ENCODE measurements at regions of chr2 and their contacts with region 1.

Region 1: DNA sequence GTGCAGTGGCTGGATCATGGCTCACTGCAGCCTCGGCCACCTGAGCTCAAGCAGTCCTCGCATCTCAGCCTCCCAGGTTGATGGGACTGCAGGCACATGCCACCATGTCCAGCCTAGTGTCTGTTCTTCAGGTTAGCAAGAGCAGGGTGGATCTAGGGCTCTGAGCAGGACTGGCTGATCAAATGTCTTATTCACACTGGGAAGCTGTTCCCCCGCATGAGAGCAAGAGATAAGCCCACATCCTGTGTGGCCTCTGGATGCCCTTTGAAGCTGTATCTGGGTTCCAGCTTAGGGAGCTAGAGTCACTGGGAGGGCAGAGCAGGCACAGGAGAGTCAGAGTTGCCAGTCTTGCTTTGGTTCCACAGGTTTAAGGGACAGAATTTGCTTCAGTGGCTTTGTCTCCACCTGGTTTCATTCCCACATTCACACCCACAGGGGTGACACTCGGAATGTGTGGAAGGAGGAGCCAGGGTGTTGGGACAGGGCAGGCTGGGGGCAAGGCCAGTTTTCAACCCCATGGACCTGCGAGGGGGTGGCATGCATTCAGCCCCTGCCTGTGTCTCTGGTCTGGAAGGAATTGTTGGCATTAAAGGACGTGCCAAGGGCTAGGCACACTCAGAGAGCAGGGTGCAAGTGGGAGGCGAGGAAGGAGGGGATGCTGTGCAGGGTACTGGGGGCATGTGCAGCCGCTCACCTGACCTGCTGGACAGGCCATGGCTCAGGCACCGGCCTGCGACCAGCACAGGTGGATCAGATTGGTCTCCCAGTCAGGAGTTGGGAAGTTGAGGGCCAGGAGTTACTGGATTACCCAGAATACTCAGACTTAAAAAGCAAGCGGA is 24.5 kb downstream of the PTPN18 start:
- DNase-seq: peak; percentile 61
- ATAC-seq: peak; percentile 87
- H3K4me3 Mint-ChIP-seq: no peak overlapping the region
- H3K27ac Mint-ChIP-seq: peak overlapping the region; percentile 70
- H3K4me1 Mint-ChIP-seq: peaks cover 48% of the 10 kb centered on the region
- H3K27me3 Mint-ChIP-seq: no peaks in the 10 kb centered on the region

Region 2: DNA sequence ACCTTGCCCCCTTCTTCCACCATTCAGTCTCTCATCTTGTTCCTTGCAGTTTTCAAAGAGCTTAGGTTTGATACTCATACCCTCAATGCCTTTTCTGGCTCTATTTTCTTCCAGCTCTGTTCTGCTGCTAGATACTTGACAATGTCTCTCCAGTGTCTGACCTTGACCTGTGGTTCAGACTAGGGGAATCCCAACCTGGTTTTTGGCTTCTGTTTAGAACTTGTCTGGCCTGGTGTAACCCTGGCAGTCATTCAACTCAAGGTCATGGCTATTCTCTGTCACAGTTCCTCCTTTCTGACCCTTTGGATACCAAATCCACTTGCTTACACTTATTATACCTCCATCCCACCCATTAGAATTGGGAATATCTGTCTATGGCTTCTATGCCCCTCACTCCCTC is 69.4 kb before region 1 on chr2:
- CTCF ChIA-PET with region 1: no interaction called
- POLR2A ChIA-PET with region 1: no interaction called
- intact Hi-C with region 1: no loop called
- DNase-seq: no peak
- ATAC-seq: no peak
- H3K4me3 Mint-ChIP-seq: no peak overlapping the region
- H3K27ac Mint-ChIP-seq: no peak overlapping the region
- H3K4me1 Mint-ChIP-seq: no peaks in the 10 kb centered on the region
- H3K27me3 Mint-ChIP-seq: no peaks in the 10 kb centered on the region

Region 3: GRCh38 chr2:130355578-130356431 is 24.5 kb before region 1 on chr2 and contains the start of gene PTPN18:
- CTCF ChIA-PET with region 1: no interaction called
- POLR2A ChIA-PET with region 1: no interaction called
- intact Hi-C with region 1: loop called in 1 of 2 experiments (anchors 1 kb)
- DNase-seq: peak; percentile 76
- ATAC-seq: peak; percentile 96
- H3K4me3 Mint-ChIP-seq: peak within 1 kb of the TSS; percentile 67
- H3K27ac Mint-ChIP-seq: peak within 1 kb of the TSS; percentile 43
- H3K4me1 Mint-ChIP-seq: peaks cover 8% of the 10 kb centered on the region
- H3K27me3 Mint-ChIP-seq: no peaks in the 10 kb centered on the region
- total RNA-seq, gene PTPN18: 41.6 to 49.3 TPM

Region 4: GRCh38 chr2:130366720-130367119 is 13.6 kb before region 1 on chr2:
- CTCF ChIA-PET with region 1: interaction called, 3 read pairs
- POLR2A ChIA-PET with region 1: no interaction called
- intact Hi-C with region 1: loop called in 1 of 2 experiments (anchors 1 kb)
- DNase-seq: no peak
- ATAC-seq: no peak
- H3K4me3 Mint-ChIP-seq: no peak overlapping the region
- H3K27ac Mint-ChIP-seq: no peak overlapping the region
- H3K4me1 Mint-ChIP-seq: peaks cover 19% of the 10 kb centered on the region
- H3K27me3 Mint-ChIP-seq: no peaks in the 10 kb centered on the region

Region 5: DNA sequence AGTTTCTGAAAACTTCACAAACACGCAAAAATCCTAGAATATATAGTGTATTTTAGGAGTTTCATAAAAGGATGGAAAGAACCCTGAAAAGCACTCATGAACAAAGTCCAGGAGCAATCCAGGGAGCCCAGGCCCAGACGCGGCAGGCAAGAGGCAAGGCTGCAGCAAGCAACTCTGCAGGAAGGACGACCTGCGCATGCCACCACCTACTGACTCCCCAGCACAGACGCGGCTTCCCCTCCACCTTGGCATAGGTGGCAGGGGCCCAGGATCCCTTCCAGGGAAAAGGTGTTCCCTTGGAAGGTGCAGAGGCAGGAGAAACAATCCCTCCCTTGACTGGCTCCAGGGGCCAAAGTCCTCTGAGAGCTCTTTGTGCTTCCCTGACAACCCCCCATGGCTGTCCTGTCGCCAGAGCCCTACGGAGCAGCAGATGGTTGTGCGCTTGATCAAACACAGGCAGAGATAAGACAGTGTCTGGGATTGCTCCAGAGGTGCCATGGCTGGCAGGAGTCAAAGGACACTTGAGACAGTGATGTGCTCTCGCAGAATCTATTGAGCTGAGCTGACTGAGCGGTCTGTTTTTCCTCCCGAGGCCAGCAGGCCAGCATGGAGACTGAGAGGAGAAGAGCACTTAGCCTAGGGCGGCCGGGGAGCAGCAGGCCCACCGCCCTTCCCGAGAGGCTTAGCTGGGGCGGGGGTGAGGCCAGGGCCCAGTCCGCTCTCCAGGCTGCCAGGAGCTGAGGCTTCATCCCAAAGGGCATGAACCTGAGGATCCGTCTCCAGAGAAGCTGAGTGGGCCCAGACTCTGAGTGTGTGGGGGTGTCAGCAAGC is 364.2 kb after region 1 on chr2:
- CTCF ChIA-PET with region 1: no interaction called
- POLR2A ChIA-PET with region 1: no interaction called
- intact Hi-C with region 1: no loop called
- DNase-seq: no peak
- ATAC-seq: no peak
- H3K4me3 Mint-ChIP-seq: no peak overlapping the region
- H3K27ac Mint-ChIP-seq: no peak overlapping the region
- H3K4me1 Mint-ChIP-seq: no peaks in the 10 kb centered on the region
- H3K27me3 Mint-ChIP-seq: peaks cover 5% of the 10 kb centered on the region

Region 6: DNA sequence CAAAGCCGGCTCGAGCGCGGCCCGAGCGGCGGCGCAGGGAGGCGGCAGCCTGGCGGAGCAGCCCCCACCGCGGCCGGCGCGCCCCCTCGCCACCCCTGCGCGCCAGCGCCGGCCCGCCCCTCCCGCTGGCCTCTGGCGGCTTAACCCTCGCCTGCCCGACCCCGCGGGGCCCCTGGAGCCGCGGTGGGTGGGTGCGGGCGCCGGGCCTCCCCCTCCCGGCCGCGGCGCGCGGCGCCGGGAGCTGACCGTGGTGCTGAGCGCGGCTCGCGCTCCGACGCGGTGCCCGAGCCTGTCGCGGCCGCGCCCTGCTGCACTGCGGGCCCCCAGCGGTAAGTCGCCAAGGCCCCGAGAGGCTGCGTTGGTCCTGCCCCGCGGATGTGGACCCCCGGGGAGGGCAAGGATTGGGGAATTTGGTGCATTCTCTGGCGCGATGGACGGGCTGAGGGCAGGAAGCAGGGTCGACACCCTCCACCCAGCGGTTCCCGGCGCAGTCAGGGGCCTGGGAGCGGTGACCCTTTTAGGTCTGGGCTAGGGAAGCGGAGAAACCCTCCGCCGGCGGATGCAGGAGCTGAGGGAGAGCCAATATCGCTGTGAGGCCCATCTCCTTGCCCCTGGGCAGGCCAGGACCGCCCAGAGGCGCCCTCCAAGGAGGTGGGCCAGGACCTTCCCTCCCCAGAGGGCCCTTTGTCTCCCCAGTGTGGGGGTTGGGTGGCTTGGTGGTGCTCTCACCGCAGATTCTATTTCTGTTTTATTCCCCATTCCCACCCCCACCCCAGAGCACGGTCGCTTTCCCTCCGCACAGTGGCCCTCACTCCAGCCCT is 375.9 kb after region 1 on chr2:
- CTCF ChIA-PET with region 1: no interaction called
- POLR2A ChIA-PET with region 1: no interaction called
- intact Hi-C with region 1: no loop called
- DNase-seq: peak; percentile 49
- ATAC-seq: peak; percentile 74
- H3K4me3 Mint-ChIP-seq: no peak overlapping the region
- H3K27ac Mint-ChIP-seq: no peak overlapping the region
- H3K4me1 Mint-ChIP-seq: no peaks in the 10 kb centered on the region
- H3K27me3 Mint-ChIP-seq: peaks cover 36% of the 10 kb centered on the region